Heart right ventricle (tissue), 16 donors: ENCODE measurements at regions of chr12 and their contacts with region 1.

Region 1: DNA sequence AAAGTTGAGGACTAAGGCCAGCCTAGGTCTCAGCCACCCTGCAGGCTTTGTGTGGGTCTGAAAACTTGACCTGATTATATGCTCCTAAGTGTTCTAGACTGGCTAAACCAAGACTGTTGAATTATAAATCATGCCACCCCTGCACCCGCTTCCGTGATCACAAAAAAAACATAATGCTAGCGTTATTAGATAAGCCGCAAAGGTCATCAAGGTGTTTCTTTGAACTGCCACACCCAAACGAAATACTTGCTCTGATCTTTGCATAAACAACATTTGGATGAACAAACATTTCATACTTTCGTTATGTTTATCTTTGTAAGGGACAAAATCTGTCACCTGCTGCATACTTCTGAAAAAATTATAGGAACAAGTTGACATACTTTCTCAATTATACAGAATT is 2.5 kb downstream of the SMCO2 start:
- DNase-seq: no peak
- ATAC-seq: no peak
- H3K4me3 ChIP-seq: no peak overlapping the region
- H3K27ac ChIP-seq: no peak overlapping the region
- H3K4me1 ChIP-seq: peaks cover 0 to 21% (median 4%) of the 10 kb centered on the region in 9 donors
- H3K27me3 ChIP-seq: no peaks in the 10 kb centered on the region
- CTCF ChIP-seq: no peak

Region 2: DNA sequence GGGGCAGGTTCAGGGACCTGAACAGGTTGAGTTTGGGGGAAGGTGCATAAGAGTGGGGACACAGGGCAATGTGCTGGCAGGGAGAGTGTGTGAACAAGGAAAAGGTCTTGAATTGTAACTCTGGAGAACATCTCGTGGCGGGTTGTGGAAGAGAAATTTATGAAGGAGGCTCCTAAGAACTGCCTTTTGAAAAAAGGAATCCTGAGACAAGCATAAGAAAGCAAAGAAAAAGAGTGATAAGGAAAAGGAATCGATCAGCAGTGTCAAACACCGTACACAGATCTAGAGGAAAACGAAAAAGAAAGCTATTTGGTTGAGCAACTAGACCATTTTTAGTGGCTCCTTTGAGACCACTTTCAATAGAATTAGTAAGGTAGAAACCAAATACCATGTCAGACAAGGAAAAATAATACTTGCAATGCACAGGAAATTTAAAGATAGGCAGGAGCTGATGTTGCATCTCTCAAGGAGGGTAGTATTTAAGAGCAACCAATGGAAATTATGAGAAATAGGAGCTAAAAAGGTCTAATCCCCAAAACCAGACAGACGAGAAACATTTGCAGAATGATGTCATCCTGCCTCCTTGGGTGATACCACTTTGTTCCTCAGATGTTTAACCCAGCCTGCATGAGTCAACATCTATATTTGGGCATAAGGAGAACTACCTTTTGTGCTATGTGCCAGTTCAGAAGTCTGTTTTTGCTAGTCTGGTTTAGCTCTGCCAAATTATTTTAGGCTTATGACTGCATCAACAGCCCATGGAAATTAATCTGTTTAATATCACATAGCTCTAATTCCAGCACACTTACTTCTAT is 269.4 kb before region 1 on chr12:
- intact Hi-C with region 1: no loop called
- DNase-seq: peak in 1 of 2 donors; percentile 44
- ATAC-seq: peak; percentile 86 to 96 (median 91)
- H3K4me3 ChIP-seq: no peak overlapping the region
- H3K27ac ChIP-seq: peak overlapping the region; percentile 42 to 87 (median 68)
- H3K4me1 ChIP-seq: peaks cover 4 to 52% (median 23%) of the 10 kb centered on the region in 9 donors
- H3K27me3 ChIP-seq: no peaks in the 10 kb centered on the region
- CTCF ChIP-seq: no peak

Region 3: DNA sequence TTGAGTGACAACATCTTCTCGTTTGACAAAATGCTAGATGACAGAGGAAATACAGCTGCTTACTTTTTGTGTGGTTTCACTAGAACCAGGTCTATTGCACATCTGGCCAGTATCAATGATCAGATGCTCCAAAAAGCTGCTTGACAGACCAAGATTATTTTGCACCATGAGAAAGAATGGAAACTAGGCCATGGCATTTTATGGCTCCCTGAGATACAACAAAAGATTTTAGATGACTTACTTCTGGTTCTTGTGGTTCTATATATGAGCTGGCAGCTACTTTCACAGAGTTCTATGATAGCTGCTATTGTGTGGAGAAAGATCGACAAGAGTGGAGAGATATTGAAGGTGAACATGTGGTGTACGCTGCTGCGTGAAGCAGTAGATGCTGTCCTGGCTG is 49.1 kb after region 1 on chr12:
- intact Hi-C with region 1: loop called in 2 of 10 experiments (anchors 10 kb)
- DNase-seq: no peak
- ATAC-seq: no peak
- H3K4me3 ChIP-seq: no peak overlapping the region
- H3K27ac ChIP-seq: no peak overlapping the region
- H3K4me1 ChIP-seq: peaks cover 0 to 10% (median 0%) of the 10 kb centered on the region in 9 donors
- H3K27me3 ChIP-seq: no peaks in the 10 kb centered on the region
- CTCF ChIP-seq: no peak